Head of caudate nucleus (tissue), 42 donors: ENCODE measurements at regions of chr3 and their contacts with region 1.

Region 1: DNA sequence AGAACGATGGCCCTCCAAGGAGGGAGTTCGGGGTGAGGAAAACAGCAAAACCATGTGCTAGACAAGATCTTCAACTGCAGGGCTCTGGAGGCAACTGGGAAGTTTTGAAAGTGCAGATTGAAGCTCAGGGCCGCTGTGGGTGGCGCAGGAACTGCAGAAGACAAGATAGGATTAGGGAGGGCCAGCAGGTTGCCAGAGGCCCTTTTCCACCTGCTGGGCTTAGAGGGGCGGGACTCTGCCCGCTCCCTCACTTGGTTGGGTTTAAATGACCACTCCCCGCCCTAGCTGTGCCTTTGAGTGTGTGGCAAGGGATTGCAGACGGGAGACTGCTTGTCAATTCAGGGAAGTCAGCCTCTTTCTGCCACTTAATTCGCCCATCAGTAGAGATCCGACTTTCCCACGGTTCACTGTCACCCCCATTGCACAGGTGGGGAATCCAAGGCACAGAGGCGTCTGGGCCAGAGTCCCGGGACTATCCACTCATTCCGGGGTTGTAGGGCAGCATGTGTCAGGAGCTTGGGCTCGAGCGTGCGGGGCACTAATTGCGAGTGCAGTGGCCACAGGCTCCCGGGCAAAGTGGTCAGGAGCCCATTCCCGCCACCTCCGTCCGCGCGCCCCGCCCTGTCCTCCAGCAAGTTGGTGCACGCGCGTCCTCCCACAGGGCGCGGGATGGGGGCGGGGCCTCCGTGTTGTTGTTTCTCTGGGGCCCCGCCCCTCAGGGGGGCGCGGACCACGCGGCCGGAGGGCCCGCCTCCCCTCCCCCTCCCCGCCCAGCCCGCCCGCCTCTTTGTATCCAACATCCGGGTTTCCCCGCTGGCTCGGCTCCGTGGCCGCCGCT is at the start of gene ACVR2B:
- DNase-seq: peak; percentile 82 to 95 (median 90)

Region 2: DNA sequence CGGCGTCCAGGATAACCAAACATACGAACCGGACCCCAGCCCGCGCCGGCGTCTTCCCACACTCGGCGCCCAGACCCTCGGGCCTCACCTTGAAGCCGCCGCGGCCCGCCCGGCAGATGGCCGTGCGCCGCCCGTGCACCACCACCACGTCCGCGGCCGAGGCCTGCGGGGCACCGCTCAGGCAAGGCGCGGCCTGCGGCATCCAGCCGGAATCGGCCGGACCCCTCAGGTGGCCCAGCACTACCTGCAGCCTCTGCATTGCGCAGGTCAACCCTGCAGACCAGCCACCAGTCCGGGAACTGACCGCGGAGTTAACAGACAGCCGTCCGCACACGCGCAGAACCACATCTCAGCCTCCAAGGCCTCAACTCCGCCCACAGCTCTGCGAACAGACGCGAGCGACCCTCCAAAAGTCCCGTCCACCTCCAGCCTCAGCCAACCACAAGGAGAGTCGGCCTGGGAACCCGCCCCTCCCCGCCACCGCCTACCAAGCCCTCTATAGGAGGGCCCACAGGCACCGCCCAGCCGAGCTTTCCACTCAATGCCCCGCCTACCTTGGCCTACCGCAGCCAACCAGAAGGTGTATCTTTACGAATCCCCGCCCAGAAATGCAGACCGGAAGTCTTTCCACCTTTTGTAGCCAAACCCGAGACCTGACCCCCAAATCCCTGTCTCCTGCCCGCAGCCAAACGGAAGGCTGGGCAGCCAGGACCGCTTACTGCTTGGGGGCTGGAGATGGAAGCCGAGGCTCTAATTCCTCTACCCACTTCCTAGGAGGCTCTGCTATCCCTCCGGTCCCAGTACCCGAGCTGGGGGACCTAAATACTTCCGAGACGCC is 316.3 kb before region 1 on chr3 and contains the start of gene ACAA1:
- intact Hi-C with region 1: loop called (anchors 10 kb)
- DNase-seq: peak; percentile 94 to 100 (median 99)

Region 3: DNA sequence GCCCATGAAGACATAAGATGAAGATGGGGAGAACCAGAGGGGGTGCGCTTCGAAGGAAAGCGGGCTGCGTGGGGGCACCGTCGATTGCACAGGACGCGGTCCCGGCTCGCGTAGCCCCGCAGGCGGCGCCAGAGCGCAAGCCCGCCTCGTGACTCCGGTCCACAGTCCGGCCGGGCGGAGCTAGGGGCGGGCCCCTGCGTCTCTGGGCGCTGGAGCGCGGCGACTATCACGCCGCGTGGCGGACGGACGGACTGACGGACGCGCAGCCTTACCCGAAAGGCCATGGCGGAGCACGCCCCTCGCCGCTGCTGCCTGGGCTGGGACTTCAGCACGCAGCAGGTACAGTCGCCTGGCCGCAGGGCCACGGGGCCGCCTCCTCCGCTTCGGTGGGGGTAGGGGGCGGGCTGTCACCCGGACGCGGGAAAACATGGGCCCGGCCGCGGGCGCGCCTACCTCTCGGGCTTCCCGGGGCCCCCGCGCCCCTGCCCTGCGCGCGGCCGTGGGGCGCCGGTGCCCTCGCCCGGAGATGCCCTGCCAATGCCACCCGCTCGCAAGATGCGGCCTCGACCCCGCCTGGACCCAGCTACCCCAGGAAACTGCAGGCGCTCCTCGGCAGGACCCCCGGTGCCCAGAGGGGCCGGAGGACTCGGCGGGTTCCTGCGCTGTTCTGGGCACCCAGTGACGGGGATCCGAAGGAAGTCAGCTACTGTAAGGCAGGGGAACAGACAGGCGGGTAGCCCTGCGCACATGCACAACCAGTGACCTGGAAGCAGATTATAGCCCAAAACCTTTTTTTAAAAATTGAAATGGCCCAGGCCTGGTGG is 106.5 kb before region 1 on chr3 and contains the start of gene XYLB:
- intact Hi-C with region 1: loop called (anchors 5 kb)
- DNase-seq: peak; percentile 52 to 92 (median 84)

Region 4: GRCh38 chr3:38487323-38487722 is 34.0 kb after region 1 on chr3:
- intact Hi-C with region 1: loop called (anchors 5 kb)
- DNase-seq: no peak

Region 5: DNA sequence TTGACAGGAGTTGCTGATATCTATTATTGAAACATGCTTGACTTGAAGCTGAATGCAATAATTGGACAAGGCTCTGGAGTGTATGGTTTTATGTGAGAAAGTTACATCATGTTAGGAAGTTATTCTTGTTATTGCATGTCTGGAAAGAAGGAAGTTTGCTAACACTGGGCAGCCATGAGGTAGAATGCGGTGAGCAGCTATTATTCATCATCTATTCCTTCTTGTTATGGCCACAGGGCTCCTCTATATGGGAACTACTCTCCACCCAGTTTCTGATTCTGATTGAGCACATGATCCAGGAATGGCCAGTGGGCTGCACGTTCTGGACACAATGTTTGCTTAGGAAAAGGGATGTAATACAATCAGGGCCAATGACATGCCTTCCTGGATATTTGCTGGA is 234.0 kb after region 1 on chr3:
- intact Hi-C with region 1: no loop called
- DNase-seq: no peak